GM10248 (cell line): ENCODE measurements at regions of chr11 and their contacts with region 1.

Region 1: DNA sequence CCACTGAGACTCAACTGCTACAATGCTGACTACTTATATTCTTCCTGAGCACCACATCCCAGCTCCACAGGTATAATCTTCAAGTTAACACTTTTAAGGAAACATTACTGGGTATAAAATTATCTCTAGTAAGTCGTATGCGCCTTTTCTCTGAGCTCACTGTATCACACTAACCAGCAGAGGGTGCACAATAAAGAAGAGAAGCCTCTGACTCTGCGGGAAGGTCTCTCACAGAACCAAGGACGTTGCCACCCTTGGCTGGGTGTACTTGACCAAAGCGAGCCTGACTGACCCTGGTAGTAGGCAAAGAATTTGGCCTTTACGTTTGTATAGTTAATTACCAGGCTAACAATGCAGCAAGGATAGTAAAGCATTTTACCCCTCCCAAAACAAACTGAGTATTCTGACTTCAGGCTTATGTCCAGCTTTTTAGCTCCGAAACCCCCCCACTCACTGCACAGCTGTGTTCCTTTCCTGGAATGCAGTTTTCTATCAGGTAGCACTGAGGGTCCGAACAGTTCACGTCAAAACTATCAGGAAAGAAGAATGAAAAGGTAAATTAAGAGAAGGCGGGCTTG is at the start of gene BTBD18:
- DNase-seq: peak; percentile 51
- CTCF ChIP-seq: peak; percentile 34

Region 2: GRCh38 chr11:57597461-57597915 is 154.3 kb before region 1 on chr11 and contains the start of gene SERPING1:
- CTCF ChIA-PET with region 1: no interaction called
- POLR2A ChIA-PET with region 1: no interaction called
- DNase-seq: no peak
- CTCF ChIP-seq: no peak

Region 3: DNA sequence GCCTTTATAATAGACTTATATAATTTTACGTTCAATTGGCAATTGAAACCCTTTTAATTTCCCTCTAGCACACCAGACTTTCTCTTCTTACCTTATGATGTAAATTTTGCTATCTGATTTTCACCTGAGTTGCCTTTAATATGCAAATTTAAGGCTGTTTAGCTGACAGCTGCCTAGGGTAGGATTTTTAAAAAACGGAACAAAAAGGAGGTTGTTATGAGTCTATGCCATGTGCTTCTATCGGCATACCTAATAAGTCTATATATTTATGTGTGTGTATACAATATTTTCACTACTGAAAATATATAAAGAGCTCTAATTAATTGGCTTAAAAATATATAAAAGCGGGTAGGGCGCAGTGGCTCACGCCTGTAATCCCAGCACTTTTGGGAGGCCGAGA is 22.3 kb before region 1 on chr11:
- CTCF ChIA-PET with region 1: no interaction called
- POLR2A ChIA-PET with region 1: no interaction called
- DNase-seq: no peak
- CTCF ChIP-seq: no peak

Region 4: GRCh38 chr11:57741132-57742086 is 10.4 kb before region 1 on chr11 and contains the start of gene SELENOH:
- CTCF ChIA-PET with region 1: interaction called, 18 read pairs
- POLR2A ChIA-PET with region 1: interaction called, 5 read pairs
- DNase-seq: peak; percentile 91
- CTCF ChIP-seq: no peak